B cell (primary cell): ENCODE measurements at regions of chr22 and their contacts with region 1.

Region 1: DNA sequence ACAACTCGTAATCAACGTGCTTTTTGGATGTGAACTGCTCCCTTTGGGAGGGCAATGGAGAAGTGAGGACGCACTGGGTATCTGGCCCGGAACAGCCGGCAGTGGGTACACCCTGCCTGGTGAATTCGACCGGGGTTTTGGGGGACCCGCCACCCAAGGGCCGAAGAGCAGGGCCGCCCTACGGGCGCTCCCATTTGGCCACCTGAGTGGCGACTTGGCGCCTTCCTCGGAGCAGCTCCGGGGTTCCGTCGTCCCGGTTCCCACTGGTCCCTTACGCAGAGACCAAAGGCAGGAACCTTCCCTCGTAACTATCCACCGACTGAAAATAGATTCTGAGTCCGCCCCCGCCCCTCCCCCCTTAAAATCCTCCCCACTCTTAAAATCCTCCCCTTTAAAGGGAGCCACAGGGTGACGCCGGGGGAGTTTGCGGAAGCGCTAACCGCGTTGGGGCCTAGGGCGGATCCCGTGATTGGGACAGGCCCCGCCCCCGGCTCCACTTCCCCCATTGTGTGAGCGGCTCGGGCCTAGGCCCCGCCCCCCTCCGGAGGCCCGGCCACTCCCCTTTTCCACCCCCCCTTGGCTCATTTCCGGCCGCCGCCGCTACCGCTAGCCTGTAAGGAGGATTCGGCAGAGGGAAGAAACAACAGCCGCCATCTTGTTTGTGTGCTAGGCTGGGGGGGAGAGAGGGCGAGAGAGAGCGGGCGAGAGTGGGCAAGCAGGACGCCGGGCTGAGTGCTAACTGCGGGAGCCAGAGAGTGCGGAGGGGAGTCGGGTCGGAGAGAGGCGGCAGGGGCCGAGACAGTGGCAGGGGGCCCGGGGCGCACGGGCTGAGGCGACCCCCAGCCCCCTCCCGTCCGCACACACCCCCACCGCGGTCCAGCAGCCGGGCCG is 1.0 kb upstream of the EP300 start:
- DNase-seq: peak; percentile 99
- ATAC-seq: peak; percentile 81
- H3K4me3 ChIP-seq: peak overlapping the region; percentile 74 to 100 (median 92)
- H3K4me3 Mint-ChIP-seq: peak overlapping the region; percentile 98
- H3K27ac ChIP-seq: peak overlapping the region; percentile 97 to 99
- H3K27ac Mint-ChIP-seq: peak overlapping the region; percentile 100
- H3K4me1 ChIP-seq: peaks cover 25% of the 10 kb centered on the region in 2 donors
- H3K4me1 Mint-ChIP-seq: peaks cover 32% of the 10 kb centered on the region
- H3K27me3 ChIP-seq: no peaks in the 10 kb centered on the region
- H3K27me3 Mint-ChIP-seq: no peaks in the 10 kb centered on the region
- CTCF ChIP-seq: no peak

Region 2: GRCh38 chr22:40856513-40857308 is 234.7 kb before region 1 on chr22 and contains the starts of genes ST13 and XPNPEP3:
- CTCF ChIA-PET with region 1: no interaction called
- POLR2A ChIA-PET with region 1: interaction called, 6 read pairs
- intact Hi-C with region 1: loop called (anchors 1 kb)
- DNase-seq: peak; percentile 98
- ATAC-seq: peak; percentile 88
- H3K4me3 ChIP-seq: peak within 1 kb of the TSS; percentile 82 to 98 (median 94)
- H3K4me3 Mint-ChIP-seq: peak within 1 kb of the TSS; percentile 97
- H3K27ac ChIP-seq: peak within 1 kb of the TSS; percentile 91 to 94
- H3K27ac Mint-ChIP-seq: peak within 1 kb of the TSS; percentile 100
- H3K4me1 ChIP-seq: peaks cover 24 to 28% of the 10 kb centered on the region in 2 donors
- H3K4me1 Mint-ChIP-seq: peaks cover 46% of the 10 kb centered on the region
- H3K27me3 ChIP-seq: no peaks in the 10 kb centered on the region
- H3K27me3 Mint-ChIP-seq: no peaks in the 10 kb centered on the region
- CTCF ChIP-seq: peak; percentile 71
- total RNA-seq, gene ST13: 175 and 187 TPM in 2 replicates
- total RNA-seq, gene XPNPEP3: 18.9 and 24.2 TPM in 2 replicates

Region 3: DNA sequence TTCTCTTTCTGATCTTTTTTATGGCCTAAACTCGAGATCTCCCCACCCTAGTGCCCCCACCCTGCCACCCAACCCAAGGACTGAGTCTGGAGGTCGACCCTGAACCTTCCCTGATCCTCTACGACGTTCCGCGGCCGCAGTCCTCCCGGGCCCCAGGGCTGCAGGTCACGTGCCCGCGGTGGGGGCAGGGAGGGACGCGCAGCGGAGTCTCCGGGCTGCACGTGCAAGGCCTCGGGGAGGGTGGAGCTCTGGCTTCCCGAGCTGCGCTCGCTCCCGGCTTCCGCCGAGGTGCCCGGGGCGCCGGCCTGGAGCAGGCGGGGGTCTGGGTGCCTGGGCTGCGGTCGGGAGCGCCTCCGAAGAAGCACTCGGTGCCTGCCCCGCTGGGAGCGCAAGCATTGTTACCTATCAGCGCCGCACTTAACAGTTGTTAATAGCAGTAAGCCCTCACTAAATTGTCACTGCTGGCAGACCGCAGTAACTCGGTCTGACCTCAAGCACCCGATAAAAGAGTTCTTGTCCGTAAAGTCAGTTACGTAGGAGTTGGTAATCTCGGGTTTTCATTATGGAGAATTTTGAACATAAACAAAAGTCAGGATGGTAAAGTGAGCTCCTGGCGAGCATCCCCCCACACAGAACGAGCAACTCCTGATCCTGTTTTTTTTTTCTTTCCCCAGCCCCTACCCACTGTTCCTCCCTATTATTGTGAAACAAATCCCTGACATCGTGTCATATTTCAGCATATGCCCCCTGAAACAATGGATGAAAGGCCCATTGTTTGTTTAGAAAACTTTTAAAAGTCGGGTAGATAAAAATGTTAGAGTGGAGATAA is 68.7 kb before region 1 on chr22:
- CTCF ChIA-PET with region 1: interaction called, 13 read pairs
- POLR2A ChIA-PET with region 1: interaction called, 60 read pairs
- intact Hi-C with region 1: loop called (anchors 1 kb)
- DNase-seq: peak; percentile 87
- ATAC-seq: peak; percentile 71
- H3K4me3 ChIP-seq: peak overlapping the region; percentile 11 to 96 (median 70)
- H3K4me3 Mint-ChIP-seq: peak overlapping the region; percentile 88
- H3K27ac ChIP-seq: peak overlapping the region; percentile 83 to 86
- H3K27ac Mint-ChIP-seq: peak overlapping the region; percentile 94
- H3K4me1 ChIP-seq: peaks cover 8 to 14% of the 10 kb centered on the region in 2 donors
- H3K4me1 Mint-ChIP-seq: peaks cover 12% of the 10 kb centered on the region
- H3K27me3 ChIP-seq: no peaks in the 10 kb centered on the region
- H3K27me3 Mint-ChIP-seq: no peaks in the 10 kb centered on the region
- CTCF ChIP-seq: no peak

Region 4: GRCh38 chr22:41070665-41071331 is 20.6 kb before region 1 on chr22:
- CTCF ChIA-PET with region 1: interaction called, 20 read pairs
- POLR2A ChIA-PET with region 1: interaction called, 28 read pairs
- intact Hi-C with region 1: loop called (anchors 1 kb)
- DNase-seq: no peak
- ATAC-seq: no peak
- H3K4me3 ChIP-seq: no peak overlapping the region
- H3K4me3 Mint-ChIP-seq: no peak overlapping the region
- H3K27ac ChIP-seq: peak overlapping the region in 1 of 2 donors; percentile 41
- H3K27ac Mint-ChIP-seq: no peak overlapping the region
- H3K4me1 ChIP-seq: peaks cover 33 to 34% of the 10 kb centered on the region in 2 donors
- H3K4me1 Mint-ChIP-seq: peaks cover 28% of the 10 kb centered on the region
- H3K27me3 ChIP-seq: no peaks in the 10 kb centered on the region
- H3K27me3 Mint-ChIP-seq: no peaks in the 10 kb centered on the region
- CTCF ChIP-seq: no peak

Region 5: GRCh38 chr22:41197038-41197972 is 105.9 kb after region 1 on chr22:
- CTCF ChIA-PET with region 1: no interaction called
- POLR2A ChIA-PET with region 1: no interaction called
- intact Hi-C with region 1: loop called (anchors 10 kb)
- DNase-seq: peak; percentile 88
- ATAC-seq: peak; percentile 92
- H3K4me3 ChIP-seq: peak overlapping the region; percentile 73 to 85 (median 76)
- H3K4me3 Mint-ChIP-seq: peak overlapping the region; percentile 89
- H3K27ac ChIP-seq: no peak overlapping the region
- H3K27ac Mint-ChIP-seq: peak overlapping the region; percentile 2
- H3K4me1 ChIP-seq: peaks cover 7 to 17% of the 10 kb centered on the region in 2 donors
- H3K4me1 Mint-ChIP-seq: peaks cover 18% of the 10 kb centered on the region
- H3K27me3 ChIP-seq: peaks cover 0 to 7% (median 3%) of the 10 kb centered on the region in 4 experiments
- H3K27me3 Mint-ChIP-seq: peaks cover 3% of the 10 kb centered on the region
- CTCF ChIP-seq: peak; percentile 5